Caco-2 (cell line): ENCODE measurements at regions of chr12 and their contacts with region 1.

Region 1: DNA sequence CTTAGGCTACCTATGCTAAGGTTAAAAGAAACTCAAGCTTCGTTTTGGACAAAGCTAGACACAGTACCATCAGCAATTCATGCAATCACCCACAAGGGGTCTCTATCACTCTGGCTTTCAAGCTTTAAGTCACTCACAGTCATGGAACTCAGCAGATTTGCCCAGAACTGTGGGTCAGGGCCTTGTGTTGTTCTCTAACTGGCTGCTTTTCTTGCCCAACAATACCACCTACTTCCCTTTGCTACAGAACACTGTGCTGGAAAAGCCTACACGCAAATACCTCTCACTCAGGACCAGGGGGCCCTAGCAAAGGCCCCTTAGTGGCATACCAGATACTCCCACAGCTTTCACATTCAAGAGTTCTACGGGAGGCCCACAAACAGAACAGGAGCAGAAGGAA is 9.1 kb downstream of the NEMP1 start:
- DNase-seq: peak; percentile 66
- H3K4me3 ChIP-seq: no peak overlapping the region
- H3K4me3 Mint-ChIP-seq: no peak overlapping the region
- H3K27ac Mint-ChIP-seq: peak overlapping the region; percentile 5
- H3K4me1 ChIP-seq: no peaks in the 10 kb centered on the region
- H3K4me1 Mint-ChIP-seq: no peaks in the 10 kb centered on the region
- H3K27me3 ChIP-seq: no peaks in the 10 kb centered on the region
- H3K27me3 Mint-ChIP-seq: no peaks in the 10 kb centered on the region
- CTCF ChIP-seq: peak; percentile 81 to 86

Region 2: DNA sequence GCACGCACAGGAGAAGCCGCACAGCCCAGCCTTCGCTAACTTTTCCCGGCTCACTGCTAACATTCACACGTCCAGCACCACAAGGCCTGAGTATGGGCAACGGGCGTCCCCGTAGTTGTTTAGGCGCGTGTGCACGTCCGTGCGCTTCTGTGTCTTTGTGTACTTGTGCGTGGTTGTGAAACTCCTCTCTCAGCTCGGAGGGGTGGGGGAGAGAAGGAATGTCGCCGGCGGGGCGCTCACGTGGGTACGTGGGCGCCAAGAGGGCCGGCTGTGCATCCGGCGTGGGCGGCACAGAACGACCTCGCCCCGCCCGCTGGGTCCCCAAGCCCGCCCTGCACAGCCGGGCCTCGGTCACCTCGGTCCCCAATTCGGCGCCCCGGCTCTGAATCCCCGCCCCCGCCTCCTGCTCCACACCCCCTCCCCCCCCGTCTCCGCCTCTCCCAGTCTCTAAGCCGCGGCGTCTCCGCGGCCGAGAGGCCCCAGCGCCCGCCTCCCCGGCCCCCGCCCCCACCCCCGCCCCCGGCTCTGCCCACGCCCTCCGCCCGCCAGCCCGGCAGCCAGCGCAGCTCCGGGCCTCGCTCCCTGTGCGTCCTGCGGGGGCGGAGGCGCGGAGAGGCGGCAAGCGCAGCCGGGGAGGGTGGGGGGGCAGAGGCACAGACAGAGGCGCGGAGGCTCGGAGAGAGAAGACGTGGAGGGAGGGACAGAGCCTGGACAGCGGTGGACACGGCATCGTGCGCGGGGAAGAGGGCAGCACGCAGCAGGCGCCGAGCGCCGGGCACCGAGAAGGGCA is 19.1 kb after region 1 on chr12 and contains the start of gene NAB2:
- CTCF ChIA-PET with region 1: interaction called, 24 read pairs
- POLR2A ChIA-PET with region 1: interaction called, 11 read pairs
- intact Hi-C with region 1: loop called (anchors 1 kb)
- DNase-seq: peak; percentile 94 to 95
- H3K4me3 ChIP-seq: peak within 1 kb of the TSS; percentile 97
- H3K4me3 Mint-ChIP-seq: peak within 1 kb of the TSS; percentile 78
- H3K27ac Mint-ChIP-seq: peak within 1 kb of the TSS; percentile 98
- H3K4me1 ChIP-seq: peaks cover 24% of the 10 kb centered on the region
- H3K4me1 Mint-ChIP-seq: peaks cover 35% of the 10 kb centered on the region
- H3K27me3 ChIP-seq: no peaks in the 10 kb centered on the region
- H3K27me3 Mint-ChIP-seq: no peaks in the 10 kb centered on the region
- CTCF ChIP-seq: no peak
- total RNA-seq, gene NAB2: 15.7 and 16.4 TPM in 2 replicates

Region 3: GRCh38 chr12:57101844-57102695 is 32.5 kb after region 1 on chr12:
- CTCF ChIA-PET with region 1: interaction called, 10 read pairs
- POLR2A ChIA-PET with region 1: no interaction called
- intact Hi-C with region 1: no loop called
- DNase-seq: peak; percentile 68 to 76
- H3K4me3 ChIP-seq: no peak overlapping the region
- H3K4me3 Mint-ChIP-seq: no peak overlapping the region
- H3K27ac Mint-ChIP-seq: peak overlapping the region; percentile 78
- H3K4me1 ChIP-seq: peaks cover 11% of the 10 kb centered on the region
- H3K4me1 Mint-ChIP-seq: no peaks in the 10 kb centered on the region
- H3K27me3 ChIP-seq: no peaks in the 10 kb centered on the region
- H3K27me3 Mint-ChIP-seq: no peaks in the 10 kb centered on the region
- CTCF ChIP-seq: no peak

Region 4: GRCh38 chr12:57182921-57183790 is 113.6 kb after region 1 on chr12:
- CTCF ChIA-PET with region 1: interaction called, 10 read pairs
- POLR2A ChIA-PET with region 1: no interaction called
- intact Hi-C with region 1: loop called (anchors 2 kb)
- DNase-seq: peak; percentile 79 to 86
- H3K4me3 ChIP-seq: no peak overlapping the region
- H3K4me3 Mint-ChIP-seq: no peak overlapping the region
- H3K27ac Mint-ChIP-seq: no peak overlapping the region
- H3K4me1 ChIP-seq: no peaks in the 10 kb centered on the region
- H3K4me1 Mint-ChIP-seq: peaks cover 17% of the 10 kb centered on the region
- H3K27me3 ChIP-seq: no peaks in the 10 kb centered on the region
- H3K27me3 Mint-ChIP-seq: no peaks in the 10 kb centered on the region
- CTCF ChIP-seq: peak; percentile 74 to 90